ENCODE measurements at regions of chr17 and their contacts with region 1.

Region 1: DNA sequence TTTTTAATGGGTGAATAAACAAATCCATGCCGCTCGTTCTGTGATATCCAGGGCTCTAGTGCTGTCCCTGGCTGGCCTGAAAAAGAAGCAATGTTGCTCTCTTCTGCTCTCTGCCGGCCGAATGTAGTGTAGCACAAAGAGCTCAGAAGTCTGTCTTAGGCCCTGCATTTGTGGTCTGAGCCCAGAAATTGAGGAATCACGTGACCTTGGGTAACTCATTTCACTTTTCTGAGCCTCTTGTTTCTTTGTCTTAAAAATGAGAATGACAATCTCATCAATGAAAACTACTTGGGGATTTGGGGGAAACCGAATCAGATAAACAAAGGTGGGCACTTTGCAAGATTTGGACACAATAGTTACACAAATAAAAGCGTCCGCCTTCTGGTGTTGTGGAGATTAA is 381.6 kb upstream of the ASIC2 start:
- DNase-seq: peak; percentile 27
- H3K4me3 Mint-ChIP-seq: no peak overlapping the region
- H3K27ac Mint-ChIP-seq: no peak overlapping the region
- H3K4me1 Mint-ChIP-seq: no peaks in the 10 kb centered on the region
- H3K27me3 Mint-ChIP-seq: no peaks in the 10 kb centered on the region

Region 2: GRCh38 chr17:33520426-33521330 is 154.0 kb before region 1 on chr17:
- intact Hi-C with region 1: loop called (anchors 1 kb)
- DNase-seq: peak; percentile 2
- H3K4me3 Mint-ChIP-seq: no peak overlapping the region
- H3K27ac Mint-ChIP-seq: no peak overlapping the region
- H3K4me1 Mint-ChIP-seq: no peaks in the 10 kb centered on the region
- H3K27me3 Mint-ChIP-seq: no peaks in the 10 kb centered on the region

Measured in activated T-helper 1 cell treated with anti-CD3 and anti-CD28 coated beads, Interleukin-12 subunit alpha, Interleukin-12 subunit beta, Interleukin-2, Interleukin-4 antibody, amounts not matched to agents 30 ng/mL and 10 ng/mL and 1 ng/mL, durations not matched to agents 14 hours and 24 hours and 36 hours (primary cell).